Mammary epithelial cell (primary cell): ENCODE measurements at regions of chr1 and their contacts with region 1.

Region 1: DNA sequence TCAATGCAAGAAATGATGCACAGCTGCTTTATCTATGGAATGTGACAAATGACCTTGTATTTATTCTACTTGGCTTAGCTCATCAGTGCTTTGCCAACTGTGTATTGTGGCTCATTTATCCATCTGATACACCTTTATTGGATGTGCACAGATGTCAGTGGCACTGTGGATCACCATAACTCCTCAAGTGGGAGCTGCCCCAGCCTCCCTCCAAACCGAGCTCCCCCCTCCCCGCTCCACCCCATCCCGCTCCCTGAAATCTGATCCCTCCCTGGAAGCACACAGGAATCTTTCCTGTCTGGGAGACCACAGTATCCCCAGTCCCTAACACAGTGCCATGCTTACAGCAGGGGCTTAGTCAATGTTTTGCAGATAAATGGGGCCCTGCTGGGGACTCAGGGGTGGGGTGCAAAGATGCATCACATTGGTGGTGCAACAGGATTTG is 156.0 kb upstream of the RAB4A start:
- DNase-seq: no peak
- H3K4me3 ChIP-seq: no peak overlapping the region
- H3K27ac ChIP-seq: no peak overlapping the region
- H3K4me1 ChIP-seq: peaks cover 4% of the 10 kb centered on the region
- H3K27me3 ChIP-seq: peaks cover 2% of the 10 kb centered on the region
- CTCF ChIP-seq: no peak

Region 2: GRCh38 chr1:229148041-229148671 is 33.2 kb after region 1 on chr1:
- CTCF ChIA-PET with region 1: no interaction called
- dilution Hi-C with region 1: loop called (anchors 5 kb)
- in situ Hi-C with region 1: no loop called
- intact Hi-C with region 1: no loop called
- DNase-seq: no peak
- H3K4me3 ChIP-seq: no peak overlapping the region
- H3K27ac ChIP-seq: no peak overlapping the region
- H3K4me1 ChIP-seq: peaks cover 3% of the 10 kb centered on the region
- H3K27me3 ChIP-seq: peaks cover 7% of the 10 kb centered on the region
- CTCF ChIP-seq: no peak